ENCODE measurements at regions of chr16 and their contacts with region 1.

Region 1: DNA sequence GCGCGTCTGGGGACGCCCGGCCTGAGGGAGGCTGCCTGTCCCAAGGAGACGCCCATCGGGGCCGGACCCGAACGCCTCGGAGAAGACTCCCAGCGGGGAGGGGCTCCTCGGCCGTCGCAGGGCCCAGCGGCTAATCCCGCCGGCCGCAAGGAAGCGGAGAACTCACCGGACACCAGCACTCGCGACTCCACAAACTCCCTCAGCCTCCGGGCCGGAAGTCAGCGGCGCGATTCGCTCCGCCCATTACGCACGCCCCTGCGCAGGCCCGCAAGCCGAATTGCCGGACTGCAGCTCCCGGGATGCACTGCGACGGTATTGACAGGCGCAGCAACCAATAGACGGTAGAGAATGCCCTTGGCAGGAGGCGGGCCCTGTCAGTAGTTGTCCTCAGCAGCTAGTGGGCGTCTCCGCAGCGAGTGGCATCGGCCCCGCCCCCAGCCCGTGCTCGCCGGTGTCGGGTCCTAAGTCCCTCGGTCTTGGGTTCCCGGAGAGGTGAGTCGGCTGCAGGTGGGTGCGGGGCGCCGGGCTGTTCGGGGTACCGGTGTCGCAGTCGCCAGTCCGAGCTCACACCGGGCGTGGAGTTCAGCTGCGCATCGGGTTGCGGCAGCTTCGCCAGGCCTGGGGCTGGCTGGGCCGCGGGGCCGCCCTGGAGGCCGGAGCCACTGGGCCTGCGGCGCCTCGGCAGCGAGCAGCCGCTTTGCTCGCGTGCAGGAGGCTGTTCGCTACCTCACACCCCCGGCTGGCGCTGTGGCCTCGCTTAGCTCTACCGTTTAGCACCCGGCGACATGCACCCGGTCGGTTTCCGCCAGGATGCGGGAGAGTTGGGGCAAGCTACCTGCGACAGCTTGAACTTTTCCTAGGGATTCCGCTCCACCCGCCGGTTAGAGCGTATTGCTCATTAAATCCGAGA is at the starts of genes ZNF174 and ZSCAN32:
- DNase-seq: peak; percentile 99
- ATAC-seq: peak; percentile 99
- H3K4me3 ChIP-seq: peak within 1 kb of the TSS; percentile 82 to 89
- H3K27ac ChIP-seq: peak within 1 kb of the TSS; percentile 91
- H3K4me1 ChIP-seq: 0 out of 2 replicates have a peak, but pooled peaks cover 3% of the 10 kb centered on the region
- H3K27me3 ChIP-seq: no peaks in the 10 kb centered on the region
- CTCF ChIP-seq: no peak
- total RNA-seq, gene ZNF174: 14.4 TPM
- total RNA-seq, gene ZSCAN32: 18.9 TPM

Region 2: DNA sequence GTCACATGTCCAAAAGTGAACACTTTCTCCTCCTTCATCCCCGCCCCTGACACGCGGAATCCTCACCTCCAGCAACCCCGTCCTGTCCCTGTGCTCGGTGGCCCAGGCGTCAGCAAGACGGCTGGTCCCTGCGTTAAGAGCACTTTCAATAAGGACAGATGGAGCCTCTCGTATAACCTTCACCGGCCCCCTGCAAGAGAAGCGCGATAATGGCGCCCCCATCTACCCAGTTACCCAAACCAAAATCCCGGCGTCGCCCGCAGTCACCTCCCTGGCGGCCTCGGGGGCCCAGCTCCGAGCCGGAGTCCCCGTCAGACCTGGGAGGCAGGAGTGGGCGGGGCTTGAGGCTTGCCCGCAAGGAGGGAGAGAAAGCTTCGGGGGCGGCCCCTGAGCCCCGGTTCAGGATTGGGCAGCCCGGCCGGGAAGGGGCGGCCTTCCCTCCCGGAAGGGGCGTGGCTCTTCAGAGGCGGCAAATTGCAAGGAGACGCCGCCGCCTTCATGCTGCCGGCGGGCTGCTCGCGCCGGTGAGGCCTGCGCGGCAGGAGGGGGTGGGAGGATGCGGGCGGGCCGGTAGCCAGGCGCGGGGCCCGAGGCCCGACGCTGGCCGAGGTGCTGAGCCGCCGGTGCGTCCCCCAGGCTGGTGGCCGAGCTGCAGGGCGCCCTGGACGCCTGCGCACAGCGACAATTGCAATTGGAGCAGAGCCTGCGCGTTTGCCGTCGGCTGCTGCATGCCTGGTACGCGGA is 941.2 kb before region 1 on chr16 and contains the start of gene TEDC2:
- CTCF ChIA-PET with region 1: no interaction called
- POLR2A ChIA-PET with region 1: interaction called, 20 read pairs
- in situ Hi-C with region 1: no loop called
- intact Hi-C with region 1: no loop called
- DNase-seq: peak; percentile 61
- ATAC-seq: peak; percentile 89
- H3K4me3 ChIP-seq: peak within 1 kb of the TSS; percentile 61 to 76
- H3K27ac ChIP-seq: peak within 1 kb of the TSS; percentile 87
- H3K4me1 ChIP-seq: peaks cover 23% of the 10 kb centered on the region
- H3K27me3 ChIP-seq: no peaks in the 10 kb centered on the region
- CTCF ChIP-seq: no peak
- total RNA-seq, gene TEDC2: 25.0 TPM

Region 3: DNA sequence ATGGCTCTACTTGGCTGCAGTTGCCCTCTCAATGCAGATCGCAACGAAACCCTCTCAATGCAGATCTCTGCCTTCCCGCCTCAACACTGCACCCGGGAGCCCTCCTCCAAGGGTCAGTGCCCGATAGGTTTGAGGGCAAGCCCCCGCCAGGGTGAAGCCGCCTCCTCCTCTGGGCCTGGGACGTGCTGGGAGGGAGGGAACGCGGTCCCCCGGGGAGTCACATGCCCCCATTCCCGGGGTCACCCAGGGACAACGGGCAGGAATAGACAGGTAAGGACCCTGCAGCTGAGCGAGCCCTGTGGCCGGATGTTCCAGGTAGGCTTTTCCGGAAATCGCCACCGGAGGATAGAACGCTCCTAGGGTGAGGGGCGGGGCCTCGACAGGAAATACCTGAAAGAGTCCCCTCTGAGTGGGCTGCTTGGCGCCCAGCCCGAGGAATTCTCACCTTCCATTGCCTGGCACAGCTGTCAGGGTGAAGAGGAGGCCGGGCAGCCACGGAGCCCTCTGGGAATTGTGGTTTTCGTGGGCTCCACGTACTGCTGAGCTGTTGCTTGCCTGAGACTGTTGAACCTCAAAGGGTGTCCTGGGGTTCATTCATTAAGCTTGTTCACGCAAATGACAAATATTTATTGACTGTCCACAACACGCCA is 12.8 kb after region 1 on chr16:
- CTCF ChIA-PET with region 1: no interaction called
- POLR2A ChIA-PET with region 1: no interaction called
- in situ Hi-C with region 1: no loop called
- intact Hi-C with region 1: no loop called
- DNase-seq: no peak
- ATAC-seq: no peak
- H3K4me3 ChIP-seq: no peak overlapping the region
- H3K27ac ChIP-seq: no peak overlapping the region
- H3K4me1 ChIP-seq: no peaks in the 10 kb centered on the region
- H3K27me3 ChIP-seq: no peaks in the 10 kb centered on the region
- CTCF ChIP-seq: no peak